ENCODE measurements at regions of chr20 and their contacts with region 1.

Region 1: GRCh38 chr20:62623488-62624324 is 18.6 kb upstream of the SLCO4A1 start:
- DNase-seq: peak; percentile 71
- ATAC-seq: peak; percentile 95
- H3K4me3 ChIP-seq: peak overlapping the region; percentile 38; the same call in 1 of the 2 replicates
- H3K27ac ChIP-seq: peak overlapping the region; percentile 82
- H3K4me1 ChIP-seq: peaks cover 37% of the 10 kb centered on the region
- H3K27me3 ChIP-seq: no peaks in the 10 kb centered on the region
- CTCF ChIP-seq: no peak
- EP300 ChIP-seq: no peak
- POLR2A ChIP-seq: peak; percentile 71
- RAD21 ChIP-seq: no peak

Region 2: GRCh38 chr20:61819921-61820825 is 803.5 kb before region 1 on chr20:
- CTCF ChIA-PET with region 1: no interaction called
- POLR2A ChIA-PET with region 1: no interaction called
- RAD21 ChIA-PET with region 1: no interaction called
- SMC1A ChIA-PET with region 1: no interaction called
- in situ Hi-C with region 1: no loop called
- intact Hi-C with region 1: no loop called
- DNase-seq: no peak
- ATAC-seq: no peak
- H3K4me3 ChIP-seq: no peak overlapping the region
- H3K27ac ChIP-seq: no peak overlapping the region
- H3K4me1 ChIP-seq: no peaks in the 10 kb centered on the region
- H3K27me3 ChIP-seq: no peaks in the 10 kb centered on the region
- CTCF ChIP-seq: no peak
- EP300 ChIP-seq: no peak
- POLR2A ChIP-seq: no peak
- RAD21 ChIP-seq: no peak

Region 3: DNA sequence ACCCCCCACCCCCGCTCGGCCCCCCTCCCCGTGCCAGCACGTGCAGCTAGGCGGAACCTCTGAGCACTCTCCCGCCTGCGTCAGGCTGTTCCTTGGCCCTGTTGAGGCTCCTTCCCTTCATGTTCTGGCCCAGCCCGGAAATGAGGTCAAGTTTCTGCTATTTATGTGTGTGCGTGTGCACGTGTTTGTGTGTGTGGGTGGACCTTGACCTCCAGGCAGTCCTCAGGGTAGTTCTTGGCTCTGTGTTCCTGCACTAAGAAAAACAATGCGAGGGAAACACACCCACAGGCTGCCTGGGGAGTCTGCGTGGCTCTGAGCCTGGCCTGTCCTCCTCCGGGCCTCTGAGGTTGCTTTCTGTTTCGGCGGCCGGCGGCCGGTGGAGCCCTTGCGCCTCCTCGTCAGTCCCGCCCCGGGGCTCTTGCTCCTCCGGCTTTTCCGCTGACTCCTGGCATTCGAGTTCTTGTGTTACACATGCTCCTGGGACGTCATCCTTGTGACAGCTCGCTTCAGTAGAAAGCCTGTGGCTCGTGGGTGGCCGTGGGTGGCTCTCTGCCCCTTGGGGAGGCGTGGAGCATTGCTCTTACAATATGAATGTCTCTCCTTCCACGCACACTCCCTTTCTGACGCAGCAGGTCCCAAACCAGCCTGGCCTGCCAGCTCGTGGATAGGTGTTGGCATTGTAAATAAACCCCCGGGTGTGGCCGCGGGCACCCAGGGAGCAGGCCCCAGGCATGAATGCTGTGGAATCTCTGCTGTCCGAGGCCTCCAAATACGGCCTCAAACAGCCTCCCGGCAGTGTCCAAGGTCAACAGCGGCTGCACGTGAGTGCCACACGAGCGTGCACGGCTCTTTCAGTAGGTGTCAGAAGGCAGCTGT is 28.6 kb after region 1 on chr20:
- CTCF ChIA-PET with region 1: interaction called, 9 read pairs
- POLR2A ChIA-PET with region 1: interaction called, 4 read pairs
- RAD21 ChIA-PET with region 1: interaction called, 25 read pairs
- SMC1A ChIA-PET with region 1: interaction called, 11 read pairs
- in situ Hi-C with region 1: no loop called
- intact Hi-C with region 1: no loop called
- DNase-seq: peak; percentile 85
- ATAC-seq: peak; percentile 84
- H3K4me3 ChIP-seq: peak overlapping the region; percentile 69
- H3K27ac ChIP-seq: peak overlapping the region; percentile 98
- H3K4me1 ChIP-seq: peaks cover 40% of the 10 kb centered on the region
- H3K27me3 ChIP-seq: no peaks in the 10 kb centered on the region
- CTCF ChIP-seq: no peak
- EP300 ChIP-seq: peak; percentile 81 to 88; a peak in 3 of 4 replicates
- POLR2A ChIP-seq: peak; percentile 77
- RAD21 ChIP-seq: no peak

Measured in GM12878 (cell line).